WTC11 (cell line): ENCODE measurements at regions of chr19 and their contacts with region 1.

Region 1: GRCh38 chr19:41883821-41884733 is 1.1 kb downstream of the ARHGEF1 start:
- DNase-seq: peak; percentile 96
- ATAC-seq: peak; percentile 94
- H3K4me3 Mint-ChIP-seq: peak overlapping the region; percentile 94
- H3K27ac Mint-ChIP-seq: peak overlapping the region; percentile 79
- H3K4me1 Mint-ChIP-seq: peaks cover 43% of the 10 kb centered on the region
- H3K27me3 Mint-ChIP-seq: peaks cover 26% of the 10 kb centered on the region
- CTCF ChIP-seq: no peak

Region 2: DNA sequence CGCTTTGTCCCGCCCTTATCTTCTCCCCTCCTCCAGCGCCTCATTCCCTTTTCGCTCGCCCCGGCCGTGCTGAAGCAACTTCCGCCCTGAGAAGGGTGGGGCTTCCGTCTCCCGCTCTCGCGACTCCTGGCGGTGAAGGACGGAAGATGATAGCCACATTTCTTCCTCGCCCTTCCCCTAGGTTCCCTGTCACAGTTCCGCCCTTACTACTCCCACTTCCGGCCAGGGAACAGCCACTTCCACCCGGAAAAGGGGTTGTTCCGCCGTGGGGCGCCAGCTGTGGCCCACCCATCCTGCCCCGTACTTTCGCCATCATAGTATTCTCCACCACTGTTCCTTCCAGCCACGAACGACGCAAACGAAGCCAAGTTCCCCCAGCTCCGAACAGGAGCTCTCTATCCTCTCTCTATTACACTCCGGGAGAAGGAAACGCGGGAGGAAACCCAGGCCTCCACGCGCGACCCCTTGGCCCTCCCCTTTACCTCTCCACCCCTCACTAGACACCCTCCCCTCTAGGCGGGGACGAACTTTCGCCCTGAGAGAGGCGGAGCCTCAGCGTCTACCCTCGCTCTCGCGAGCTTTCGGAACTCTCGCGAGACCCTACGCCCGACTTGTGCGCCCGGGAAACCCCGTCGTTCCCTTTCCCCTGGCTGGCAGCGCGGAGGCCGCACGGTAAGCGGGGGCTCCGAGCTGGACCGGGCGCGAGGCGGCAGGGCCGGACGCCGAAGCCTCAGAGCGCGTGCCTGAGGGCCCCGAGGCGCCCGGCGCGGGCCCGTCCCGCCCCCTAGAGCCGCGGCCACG is 24.3 kb before region 1 on chr19 and contains the start of gene RPS19:
- CTCF ChIA-PET with region 1: interaction called, 7 read pairs
- POLR2A ChIA-PET with region 1: interaction called, 10 read pairs
- DNase-seq: peak; percentile 98
- ATAC-seq: peak; percentile 89
- H3K4me3 Mint-ChIP-seq: peak within 1 kb of the TSS; percentile 94
- H3K27ac Mint-ChIP-seq: peak within 1 kb of the TSS; percentile 99
- H3K4me1 Mint-ChIP-seq: peaks cover 43% of the 10 kb centered on the region
- H3K27me3 Mint-ChIP-seq: peaks cover 13% of the 10 kb centered on the region
- CTCF ChIP-seq: 0 out of 2 replicates have a peak, but pooled peaks have one; percentile 23
- total RNA-seq, gene RPS19: 3,152 to 3,787 TPM (median 3,713 TPM) in 3 replicates

Region 3: DNA sequence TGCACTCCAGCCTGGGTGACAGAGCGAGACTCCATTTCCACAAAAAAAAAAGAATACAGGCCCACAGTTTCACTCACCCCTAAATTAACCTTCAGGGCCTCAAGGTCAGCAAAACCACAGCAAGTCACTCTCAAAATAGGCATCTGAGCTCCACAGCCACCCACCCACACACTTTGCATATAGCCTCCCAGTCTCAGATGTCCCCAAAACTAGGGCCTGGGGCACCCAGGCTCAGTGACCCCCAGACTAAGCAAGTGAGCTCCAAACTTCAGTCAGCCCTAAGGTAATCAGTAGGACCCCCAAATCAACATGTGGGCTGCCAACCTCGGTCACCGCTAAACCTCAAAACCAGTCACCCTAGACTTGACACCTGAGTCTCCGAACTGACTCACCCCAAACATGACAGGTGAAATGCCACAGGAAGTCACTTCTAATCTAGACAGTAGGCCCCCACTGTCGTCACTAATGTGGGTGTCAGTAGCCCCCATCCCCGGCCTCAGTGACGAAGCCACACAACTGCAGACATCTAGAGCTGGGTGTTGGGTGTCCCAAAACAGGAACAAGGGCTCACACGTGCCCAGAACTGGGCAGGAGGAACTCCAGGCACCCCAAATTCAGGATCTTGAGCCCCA is 61.2 kb after region 1 on chr19:
- CTCF ChIA-PET with region 1: no interaction called
- POLR2A ChIA-PET with region 1: no interaction called
- DNase-seq: no peak
- ATAC-seq: no peak
- H3K4me3 Mint-ChIP-seq: no peak overlapping the region
- H3K27ac Mint-ChIP-seq: no peak overlapping the region
- H3K4me1 Mint-ChIP-seq: no peaks in the 10 kb centered on the region
- H3K27me3 Mint-ChIP-seq: peaks cover 48% of the 10 kb centered on the region
- CTCF ChIP-seq: no peak